Naive thymus-derived CD4-positive, alpha-beta T cell (primary cell): ENCODE measurements at regions of chr1 and their contacts with region 1.

Region 1: DNA sequence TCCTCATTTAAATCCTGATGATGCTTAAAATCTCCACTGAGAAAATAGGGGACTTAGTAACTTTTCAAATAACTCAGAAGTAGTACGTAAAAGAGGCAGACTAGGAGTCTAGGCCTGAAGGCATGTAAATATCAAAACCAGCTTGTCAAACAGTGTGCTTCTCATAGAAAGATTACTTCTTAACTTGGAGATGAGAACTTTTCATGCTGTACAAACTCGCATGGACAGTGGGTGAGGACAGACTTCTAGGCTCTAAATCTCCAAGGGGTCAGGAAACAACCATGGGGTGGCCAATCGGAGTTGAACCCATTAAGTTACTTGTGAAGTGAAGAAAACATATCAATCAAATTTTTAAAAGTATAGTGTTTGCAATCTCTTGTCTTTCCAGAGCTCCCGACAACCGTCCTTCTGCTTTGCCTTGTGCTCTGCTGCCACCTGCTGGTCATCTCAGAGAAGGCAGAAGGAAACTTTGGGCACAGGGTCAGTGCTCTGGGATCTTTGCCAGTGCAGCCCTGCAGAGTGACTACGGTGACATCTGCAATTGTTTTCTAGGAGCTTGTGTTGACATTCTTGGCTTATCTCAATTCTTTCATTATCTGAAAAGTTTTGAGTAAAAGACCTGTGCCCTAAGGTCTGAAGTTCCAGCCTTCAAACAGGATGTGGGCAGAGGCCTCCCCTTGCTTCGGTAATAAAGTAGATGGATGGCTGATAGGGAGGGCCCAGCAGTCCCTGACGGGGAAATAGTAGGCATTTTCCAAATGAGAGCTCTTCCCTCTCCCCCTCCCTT is 105.1 kb upstream of the PDE4B start:
- DNase-seq: peak; percentile 47 to 81 (median 71)
- ATAC-seq: peak; percentile 92
- H3K4me3 ChIP-seq: no peak overlapping the region
- H3K4me3 Mint-ChIP-seq: peak overlapping the region in 1 of 10 donors; percentile 17
- H3K27ac ChIP-seq: no peak overlapping the region
- H3K27ac Mint-ChIP-seq: peak overlapping the region in 1 of 9 donors; percentile 51
- H3K4me1 ChIP-seq: peaks cover 0 to 5% of the 10 kb centered on the region in 2 donors
- H3K4me1 Mint-ChIP-seq: peaks cover 0 to 14% (median 0%) of the 10 kb centered on the region in 7 donors
- H3K27me3 ChIP-seq: no peaks in the 10 kb centered on the region
- H3K27me3 Mint-ChIP-seq: peaks cover 11 to 29% (median 16%) of the 10 kb centered on the region in 5 donors

Region 2: DNA sequence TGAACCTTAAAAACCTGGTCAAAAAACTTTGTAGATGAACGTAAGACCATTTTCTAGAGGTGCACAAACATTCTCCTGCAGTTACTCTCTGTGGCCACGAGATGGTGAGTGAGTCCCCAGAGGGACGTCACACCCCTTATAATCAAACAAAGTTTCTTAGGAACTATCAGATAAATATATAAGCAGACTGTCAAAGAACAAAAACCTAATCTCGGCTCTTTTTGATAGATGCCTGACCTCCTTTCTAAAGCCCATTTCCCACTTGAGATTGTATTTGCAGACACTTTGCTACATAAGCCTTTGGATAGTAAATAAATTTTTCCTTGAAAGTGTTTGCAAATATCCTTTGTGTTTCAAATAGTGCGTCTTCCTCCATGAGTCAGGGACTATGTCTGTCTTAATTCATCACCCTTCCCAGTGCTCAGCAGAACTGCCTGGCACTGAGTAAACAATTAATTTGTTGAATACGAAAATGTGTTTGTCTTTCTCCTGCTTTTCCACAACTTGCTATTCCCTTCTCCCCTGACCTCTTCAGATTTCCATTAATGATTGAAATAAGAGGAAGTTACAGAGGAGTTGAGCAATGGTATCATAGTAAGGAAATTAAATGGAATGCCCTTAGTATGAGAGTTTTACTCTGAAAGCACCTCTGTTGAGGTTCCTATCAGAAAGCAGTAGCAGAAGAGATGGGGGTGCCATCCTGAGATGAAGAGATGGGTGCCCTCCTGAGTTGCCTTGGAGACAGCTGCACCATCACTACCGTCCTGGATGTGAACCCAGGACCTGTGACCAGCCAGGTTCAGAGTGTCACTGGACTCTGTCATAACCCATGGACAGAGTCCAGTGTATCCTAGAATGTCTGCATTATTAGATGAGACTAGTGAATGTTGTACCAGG is 1000.5 kb before region 1 on chr1:
- CTCF ChIA-PET with region 1: interaction called, 3 read pairs
- POLR2A ChIA-PET with region 1: no interaction called
- intact Hi-C with region 1: loop called (anchors 1 to 2 kb)
- DNase-seq: peak in 7 of 9 donors; percentile 9 to 45 (median 39)
- ATAC-seq: peak; percentile 75
- H3K4me3 ChIP-seq: no peak overlapping the region
- H3K4me3 Mint-ChIP-seq: no peak overlapping the region
- H3K27ac ChIP-seq: no peak overlapping the region
- H3K27ac Mint-ChIP-seq: no peak overlapping the region
- H3K4me1 ChIP-seq: no peaks in the 10 kb centered on the region
- H3K4me1 Mint-ChIP-seq: peaks cover 0 to 11% (median 0%) of the 10 kb centered on the region in 7 donors
- H3K27me3 ChIP-seq: no peaks in the 10 kb centered on the region
- H3K27me3 Mint-ChIP-seq: no peaks in the 10 kb centered on the region

Region 3: GRCh38 chr1:65059930-65060538 is 627.6 kb before region 1 on chr1:
- CTCF ChIA-PET with region 1: interaction called, 6 read pairs
- POLR2A ChIA-PET with region 1: interaction called, 5 read pairs
- intact Hi-C with region 1: loop called (anchors 1 to 2 kb)
- DNase-seq: peak in 3 of 9 donors; percentile 25 to 29 (median 25)
- ATAC-seq: peak; percentile 51
- H3K4me3 ChIP-seq: no peak overlapping the region
- H3K4me3 Mint-ChIP-seq: peak overlapping the region in 5 of 10 donors; percentile 8 to 54 (median 51)
- H3K27ac ChIP-seq: no peak overlapping the region
- H3K27ac Mint-ChIP-seq: peak overlapping the region in 6 of 9 donors; percentile 12 to 76 (median 34)
- H3K4me1 ChIP-seq: peaks cover 6 to 16% of the 10 kb centered on the region in 2 donors
- H3K4me1 Mint-ChIP-seq: peaks cover 21 to 87% (median 80%) of the 10 kb centered on the region in 7 donors
- H3K27me3 ChIP-seq: no peaks in the 10 kb centered on the region
- H3K27me3 Mint-ChIP-seq: no peaks in the 10 kb centered on the region

Region 4: DNA sequence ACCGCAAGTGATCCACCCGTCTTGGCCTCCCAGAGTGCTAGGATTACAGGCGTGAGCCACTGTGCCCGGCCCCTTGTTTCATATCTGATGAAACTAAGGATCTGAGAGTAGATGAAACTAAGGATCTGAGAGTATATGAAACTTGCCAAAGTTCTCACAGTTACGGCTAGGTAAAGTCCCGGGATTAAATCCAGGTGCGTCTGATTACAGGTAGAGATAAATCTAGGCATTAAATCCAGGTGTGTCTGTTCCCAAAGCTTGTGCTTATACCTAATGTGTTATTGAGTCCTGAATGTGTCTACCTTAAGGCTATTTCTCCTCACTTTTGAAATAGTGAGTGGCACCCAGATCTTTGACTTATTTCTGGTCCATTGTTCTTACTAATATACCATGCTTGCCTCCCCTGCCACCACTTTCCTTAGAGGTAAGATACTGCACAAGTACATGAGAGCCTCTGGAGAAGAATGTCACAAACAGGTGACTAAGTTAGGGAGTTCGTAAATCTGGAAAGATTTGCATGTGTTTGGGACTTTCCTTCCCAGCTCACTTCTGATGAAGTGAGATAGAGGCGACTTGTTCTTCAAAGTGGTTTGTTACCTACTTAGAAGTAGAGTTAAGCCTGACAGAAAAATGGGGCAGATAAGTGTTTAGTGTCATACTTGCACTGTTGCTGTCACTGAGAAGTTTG is 473.1 kb before region 1 on chr1:
- CTCF ChIA-PET with region 1: interaction called, 24 read pairs
- POLR2A ChIA-PET with region 1: no interaction called
- intact Hi-C with region 1: loop called in 1 of 2 experiments (anchors 5 kb)
- DNase-seq: no peak
- ATAC-seq: no peak
- H3K4me3 ChIP-seq: no peak overlapping the region
- H3K4me3 Mint-ChIP-seq: no peak overlapping the region
- H3K27ac ChIP-seq: no peak overlapping the region
- H3K27ac Mint-ChIP-seq: peak overlapping the region in 1 of 9 donors; percentile 58
- H3K4me1 ChIP-seq: no peaks in the 10 kb centered on the region
- H3K4me1 Mint-ChIP-seq: peaks cover 4 to 43% (median 15%) of the 10 kb centered on the region in 7 donors
- H3K27me3 ChIP-seq: no peaks in the 10 kb centered on the region
- H3K27me3 Mint-ChIP-seq: peaks cover 0 to 4% (median 0%) of the 10 kb centered on the region in 5 donors

Region 5: GRCh38 chr1:65339866-65340468 is 347.7 kb before region 1 on chr1:
- CTCF ChIA-PET with region 1: no interaction called
- POLR2A ChIA-PET with region 1: no interaction called
- intact Hi-C with region 1: loop called in 1 of 2 experiments (anchors 10 kb)
- DNase-seq: no peak
- ATAC-seq: no peak
- H3K4me3 ChIP-seq: no peak overlapping the region
- H3K4me3 Mint-ChIP-seq: no peak overlapping the region
- H3K27ac ChIP-seq: no peak overlapping the region
- H3K27ac Mint-ChIP-seq: no peak overlapping the region
- H3K4me1 ChIP-seq: no peaks in the 10 kb centered on the region
- H3K4me1 Mint-ChIP-seq: peaks cover 0 to 4% (median 0%) of the 10 kb centered on the region in 7 donors
- H3K27me3 ChIP-seq: no peaks in the 10 kb centered on the region
- H3K27me3 Mint-ChIP-seq: peaks cover 0 to 6% (median 0%) of the 10 kb centered on the region in 5 donors

Region 6: GRCh38 chr1:65632235-65632634 is 55.4 kb before region 1 on chr1:
- CTCF ChIA-PET with region 1: no interaction called
- POLR2A ChIA-PET with region 1: no interaction called
- intact Hi-C with region 1: no loop called
- DNase-seq: no peak
- ATAC-seq: no peak
- H3K4me3 ChIP-seq: no peak overlapping the region
- H3K4me3 Mint-ChIP-seq: no peak overlapping the region
- H3K27ac ChIP-seq: no peak overlapping the region
- H3K27ac Mint-ChIP-seq: no peak overlapping the region
- H3K4me1 ChIP-seq: no peaks in the 10 kb centered on the region
- H3K4me1 Mint-ChIP-seq: peaks cover 0 to 4% (median 0%) of the 10 kb centered on the region in 7 donors
- H3K27me3 ChIP-seq: no peaks in the 10 kb centered on the region
- H3K27me3 Mint-ChIP-seq: peaks cover 0 to 9% (median 5%) of the 10 kb centered on the region in 5 donors